ENCODE measurements at regions of chr14 and their contacts with region 1.

Region 1: GRCh38 chr14:89365061-89365801 is 51.8 kb downstream of the FOXN3 start:
- DNase-seq: peak; percentile 80
- H3K4me3 Mint-ChIP-seq: peak overlapping the region; percentile 73
- H3K27ac Mint-ChIP-seq: peak overlapping the region; percentile 97
- H3K4me1 Mint-ChIP-seq: peaks cover 66% of the 10 kb centered on the region
- H3K27me3 Mint-ChIP-seq: no peaks in the 10 kb centered on the region

Region 2: DNA sequence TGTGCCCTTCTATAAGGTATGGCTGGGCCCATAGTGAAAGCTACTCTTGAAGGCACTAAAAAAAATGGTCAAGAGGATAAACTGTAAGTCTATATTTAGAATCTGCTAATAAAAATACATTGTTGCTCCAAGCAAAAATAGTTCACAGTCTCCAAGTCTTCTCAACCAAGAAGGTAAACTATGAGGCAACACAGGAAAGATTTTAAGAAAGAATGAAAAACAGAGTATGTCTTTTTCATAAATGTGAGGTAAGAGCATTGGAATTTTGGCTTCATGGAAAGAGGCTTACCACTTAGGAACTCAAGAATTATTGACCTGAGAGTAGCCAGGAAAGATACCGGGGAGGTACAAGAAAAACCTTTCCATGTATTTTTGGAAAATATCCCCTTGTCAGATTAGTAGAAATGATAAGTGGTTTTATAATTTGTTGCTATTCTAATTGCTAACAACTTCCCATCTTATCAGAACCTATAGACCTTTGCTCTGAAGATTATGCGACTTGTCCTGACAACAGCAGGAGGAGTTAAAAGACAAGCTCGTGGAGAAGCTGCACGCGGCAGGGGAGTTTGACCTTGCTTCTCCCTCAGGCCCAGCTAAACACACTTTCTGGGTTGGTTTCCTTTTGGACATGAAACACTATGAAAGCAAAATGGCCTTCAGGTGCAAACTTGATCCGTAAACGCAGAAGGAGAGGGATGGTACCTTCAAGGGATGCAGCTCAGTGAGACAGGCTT is 186.3 kb before region 1 on chr14:
- CTCF ChIA-PET with region 1: no interaction called
- intact Hi-C with region 1: loop called (anchors 5 kb)
- DNase-seq: no peak
- H3K4me3 Mint-ChIP-seq: no peak overlapping the region
- H3K27ac Mint-ChIP-seq: no peak overlapping the region
- H3K4me1 Mint-ChIP-seq: peaks cover 9% of the 10 kb centered on the region
- H3K27me3 Mint-ChIP-seq: no peaks in the 10 kb centered on the region

Region 3: GRCh38 chr14:89214221-89214936 is 150.9 kb before region 1 on chr14:
- CTCF ChIA-PET with region 1: no interaction called
- intact Hi-C with region 1: no loop called
- DNase-seq: no peak
- H3K4me3 Mint-ChIP-seq: no peak overlapping the region
- H3K27ac Mint-ChIP-seq: no peak overlapping the region
- H3K4me1 Mint-ChIP-seq: peaks cover 7% of the 10 kb centered on the region
- H3K27me3 Mint-ChIP-seq: no peaks in the 10 kb centered on the region

Region 4: DNA sequence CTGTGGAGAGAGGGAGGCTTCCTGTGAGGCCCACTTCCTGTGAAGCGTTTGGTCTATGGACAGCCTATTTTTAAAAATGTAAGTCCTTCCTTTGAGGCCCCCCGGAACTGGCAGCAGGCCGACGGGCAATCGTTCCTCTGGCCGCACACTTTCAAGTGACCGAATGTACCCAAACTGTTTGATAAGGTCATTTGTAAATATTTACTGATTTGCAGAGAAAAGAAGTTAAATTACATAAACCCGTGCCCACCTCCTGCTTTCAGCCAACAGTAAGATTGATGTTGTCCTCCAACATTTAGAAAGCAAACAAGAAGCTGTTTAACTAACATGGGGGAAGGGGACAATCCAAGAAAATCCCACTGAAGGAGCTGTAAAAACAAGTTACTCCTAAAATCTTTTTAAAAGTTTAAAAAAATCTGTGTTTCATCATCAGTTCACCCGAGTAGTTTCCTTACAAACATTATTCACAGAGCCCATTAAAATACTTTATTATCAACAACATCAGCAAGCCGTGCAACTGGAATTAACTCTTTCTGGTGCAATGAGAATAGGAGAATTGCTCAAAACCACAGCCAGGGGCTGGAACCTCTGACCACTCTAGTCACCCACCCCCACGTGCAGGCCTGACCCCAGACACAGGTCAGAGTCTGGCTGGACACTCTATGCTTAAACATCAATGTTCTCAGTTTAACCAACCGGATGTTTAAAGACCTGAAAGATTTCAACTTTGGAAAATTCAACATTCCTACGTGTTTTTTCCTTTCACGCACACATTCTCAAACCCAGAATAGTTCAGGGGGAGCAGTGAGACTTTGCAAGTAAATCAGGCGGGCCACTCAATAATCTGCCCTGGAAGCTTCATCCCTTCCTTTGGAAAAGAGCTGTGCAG is 13.5 kb before region 1 on chr14:
- CTCF ChIA-PET with region 1: interaction called, 3 read pairs
- intact Hi-C with region 1: loop called (anchors 1 kb)
- DNase-seq: peak; percentile 50
- H3K4me3 Mint-ChIP-seq: peak overlapping the region; percentile 31
- H3K27ac Mint-ChIP-seq: peak overlapping the region; percentile 93
- H3K4me1 Mint-ChIP-seq: peaks cover 51% of the 10 kb centered on the region
- H3K27me3 Mint-ChIP-seq: no peaks in the 10 kb centered on the region

Region 5: GRCh38 chr14:89406941-89407340 is 41.7 kb after region 1 on chr14:
- CTCF ChIA-PET with region 1: no interaction called
- intact Hi-C with region 1: loop called (anchors 2 kb)
- DNase-seq: no peak
- H3K4me3 Mint-ChIP-seq: no peak overlapping the region
- H3K27ac Mint-ChIP-seq: no peak overlapping the region
- H3K4me1 Mint-ChIP-seq: peaks cover 68% of the 10 kb centered on the region
- H3K27me3 Mint-ChIP-seq: no peaks in the 10 kb centered on the region

Region 6: GRCh38 chr14:89430391-89431236 is 65.4 kb after region 1 on chr14:
- CTCF ChIA-PET with region 1: no interaction called
- intact Hi-C with region 1: loop called (anchors 1 kb)
- DNase-seq: peak; percentile 80
- H3K4me3 Mint-ChIP-seq: peak overlapping the region; percentile 81
- H3K27ac Mint-ChIP-seq: peak overlapping the region; percentile 96
- H3K4me1 Mint-ChIP-seq: peaks cover 70% of the 10 kb centered on the region
- H3K27me3 Mint-ChIP-seq: no peaks in the 10 kb centered on the region

Region 7: DNA sequence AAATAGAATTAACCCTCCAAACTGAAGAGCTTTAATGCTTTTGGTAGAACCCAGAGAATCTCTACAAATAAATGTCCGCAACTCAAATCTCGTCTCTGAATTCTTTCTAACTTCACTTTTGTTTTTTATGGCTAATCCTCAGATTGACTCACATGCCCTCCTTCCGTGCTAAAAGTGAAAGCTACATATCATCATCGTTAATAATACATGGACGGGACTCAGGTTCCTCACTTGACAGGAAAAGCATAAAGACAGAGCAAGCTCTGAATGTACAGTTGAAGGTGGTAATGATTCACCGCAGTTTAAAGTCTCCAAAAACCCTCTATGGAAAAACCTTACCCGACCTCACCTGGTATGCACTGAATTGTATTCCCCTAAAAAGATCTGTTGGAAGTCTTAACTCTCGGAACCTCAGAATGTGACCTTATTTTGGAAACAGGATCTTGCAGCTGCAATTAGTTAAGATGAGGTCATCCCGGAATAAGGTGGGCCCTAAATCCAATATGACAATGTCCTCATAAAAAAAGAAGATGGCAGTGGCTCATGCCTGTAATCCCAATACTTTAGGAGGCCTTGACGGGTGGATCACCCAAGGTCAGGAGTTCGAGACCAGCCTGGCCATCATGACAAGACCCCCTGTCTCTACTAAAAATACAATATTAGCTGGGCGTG is 199.2 kb after region 1 on chr14:
- CTCF ChIA-PET with region 1: no interaction called
- intact Hi-C with region 1: no loop called
- DNase-seq: no peak
- H3K4me3 Mint-ChIP-seq: no peak overlapping the region
- H3K27ac Mint-ChIP-seq: no peak overlapping the region
- H3K4me1 Mint-ChIP-seq: peaks cover 44% of the 10 kb centered on the region
- H3K27me3 Mint-ChIP-seq: no peaks in the 10 kb centered on the region

Region 8: GRCh38 chr14:89613260-89614008 is 248.2 kb after region 1 on chr14:
- CTCF ChIA-PET with region 1: interaction called, 3 read pairs
- intact Hi-C with region 1: loop called (anchors 1 kb)
- DNase-seq: peak; percentile 70
- H3K4me3 Mint-ChIP-seq: peak overlapping the region; percentile 46
- H3K27ac Mint-ChIP-seq: peak overlapping the region; percentile 84
- H3K4me1 Mint-ChIP-seq: peaks cover 78% of the 10 kb centered on the region
- H3K27me3 Mint-ChIP-seq: no peaks in the 10 kb centered on the region

Measured in activated naive CD4-positive, alpha-beta T cell treated with anti-CD3 and anti-CD28 coated beads for 36 hours (primary cell).